ENCODE measurements at regions of chr18 and their contacts with region 1.

Region 1: GRCh38 chr18:45879681-45880655 is 54.5 kb downstream of the SIGLEC15 start:
- DNase-seq: peak; percentile 38
- H3K4me3 ChIP-seq: no peak overlapping the region
- H3K27ac ChIP-seq: no peak overlapping the region
- H3K27me3 ChIP-seq: no peaks in the 10 kb centered on the region
- CTCF ChIP-seq: peak; percentile 99

Region 2: DNA sequence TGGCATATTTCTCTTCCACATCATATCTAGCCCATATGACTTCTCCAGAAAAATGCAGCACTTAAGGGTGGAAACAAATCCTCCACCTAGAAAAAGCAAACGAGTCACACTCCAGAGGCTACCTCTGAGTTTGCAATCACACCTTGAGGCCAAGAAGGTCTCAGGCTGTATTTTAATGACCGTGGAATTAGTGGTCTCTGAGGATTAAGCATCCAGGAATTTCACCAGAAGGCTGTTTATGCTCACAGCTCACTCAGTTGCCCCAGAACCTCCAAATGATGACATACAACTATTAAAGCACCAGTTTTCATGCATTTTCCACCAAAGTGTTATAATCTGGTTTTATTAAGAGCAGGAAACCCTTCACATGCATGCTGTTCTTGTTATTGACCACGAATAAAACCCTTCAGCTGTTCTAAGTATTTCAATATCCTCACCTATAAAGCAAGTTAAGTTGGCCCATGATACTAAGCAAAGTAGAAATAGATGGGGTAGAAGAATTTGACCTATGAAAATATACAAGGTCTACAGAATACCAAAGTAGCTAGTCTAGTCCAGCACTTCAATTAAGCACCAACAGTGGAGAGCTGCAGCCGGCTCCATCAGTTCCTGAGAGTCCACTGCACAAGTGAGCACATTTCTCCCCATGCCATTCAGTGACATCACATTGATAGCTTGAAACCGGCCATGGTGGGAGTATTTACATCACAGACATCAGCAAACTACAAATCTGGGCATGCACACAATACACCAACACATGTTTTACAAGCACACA is 195.4 kb before region 1 on chr18:
- CTCF ChIA-PET with region 1: interaction called, 110 read pairs
- POLR2A ChIA-PET with region 1: no interaction called
- DNase-seq: no peak
- H3K4me3 ChIP-seq: no peak overlapping the region
- H3K27ac ChIP-seq: peak overlapping the region; percentile 32
- H3K27me3 ChIP-seq: no peaks in the 10 kb centered on the region
- CTCF ChIP-seq: no peak

Region 3: GRCh38 chr18:45722899-45723298 is 157.1 kb before region 1 on chr18:
- CTCF ChIA-PET with region 1: interaction called, 67 read pairs
- POLR2A ChIA-PET with region 1: no interaction called
- DNase-seq: peak; percentile 42
- H3K4me3 ChIP-seq: no peak overlapping the region
- H3K27ac ChIP-seq: no peak overlapping the region
- H3K27me3 ChIP-seq: no peaks in the 10 kb centered on the region
- CTCF ChIP-seq: peak; percentile 88

Region 4: GRCh38 chr18:45890606-45891005 is 10.6 kb after region 1 on chr18:
- CTCF ChIA-PET with region 1: interaction called, 39 read pairs
- POLR2A ChIA-PET with region 1: no interaction called
- DNase-seq: no peak
- H3K4me3 ChIP-seq: no peak overlapping the region
- H3K27ac ChIP-seq: peak overlapping the region; percentile 25
- H3K27me3 ChIP-seq: no peaks in the 10 kb centered on the region
- CTCF ChIP-seq: no peak

Region 5: GRCh38 chr18:46073474-46074331 is 193.7 kb after region 1 on chr18:
- CTCF ChIA-PET with region 1: interaction called, 21 read pairs
- POLR2A ChIA-PET with region 1: no interaction called
- DNase-seq: no peak
- H3K4me3 ChIP-seq: no peak overlapping the region
- H3K27ac ChIP-seq: no peak overlapping the region
- H3K27me3 ChIP-seq: no peaks in the 10 kb centered on the region
- CTCF ChIP-seq: peak; percentile 61